OCI-LY7 (cell line): ENCODE measurements at regions of chr2 and their contacts with region 1.

Region 1: GRCh38 chr2:204135752-204136151 is 199.2 kb downstream of the ICOS start:
- DNase-seq: no peak
- H3K4me3 ChIP-seq: no peak overlapping the region
- H3K27ac ChIP-seq: no peak overlapping the region
- H3K4me1 ChIP-seq: no peaks in the 10 kb centered on the region
- CTCF ChIP-seq: no peak

Region 2: GRCh38 chr2:204213588-204213987 is 77.8 kb after region 1 on chr2:
- CTCF ChIA-PET with region 1: no interaction called
- POLR2A ChIA-PET with region 1: no interaction called
- intact Hi-C with region 1: loop called (anchors 2 kb)
- DNase-seq: no peak
- H3K4me3 ChIP-seq: no peak overlapping the region
- H3K27ac ChIP-seq: no peak overlapping the region
- H3K4me1 ChIP-seq: no peaks in the 10 kb centered on the region
- CTCF ChIP-seq: no peak